OCI-LY7 (cell line): ENCODE measurements at regions of chr19 and their contacts with region 1.

Region 1: DNA sequence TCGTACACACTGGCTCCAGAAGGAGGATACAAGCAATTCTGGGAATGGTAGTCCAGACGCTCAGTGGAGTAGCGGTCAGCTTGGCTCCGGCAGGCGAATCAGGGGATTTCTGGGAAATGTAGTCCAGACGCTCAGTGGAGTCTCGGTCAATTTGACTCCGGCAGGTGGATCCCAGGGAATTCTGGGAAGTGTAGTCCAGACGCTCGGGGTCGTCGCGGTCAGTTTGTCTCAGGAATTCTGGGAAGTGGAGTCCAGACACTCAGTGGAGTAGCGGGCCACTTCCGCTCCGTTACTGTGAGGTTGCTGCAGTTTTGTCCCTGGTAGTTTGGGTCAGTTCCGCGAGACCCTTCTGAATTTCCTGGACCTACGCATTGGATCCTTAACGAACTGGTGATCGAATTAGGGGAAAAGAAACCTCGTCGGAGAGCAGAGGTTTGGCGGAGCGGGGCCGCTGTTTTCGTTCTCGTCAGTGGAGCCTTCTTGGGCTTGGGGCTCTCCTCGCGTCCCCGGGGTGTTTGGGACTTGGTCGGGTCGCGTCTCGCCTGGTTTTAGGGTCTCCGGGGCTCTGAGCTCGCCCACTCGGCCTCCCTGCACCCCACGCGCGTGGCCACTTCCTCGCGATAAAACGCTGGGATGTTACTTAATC is at the start of gene ZNF225:
- DNase-seq: peak; percentile 97
- H3K4me3 ChIP-seq: peak within 1 kb of the TSS; percentile 83
- H3K27ac ChIP-seq: no peak within 1 kb of the TSS
- H3K4me1 ChIP-seq: peaks cover 16% of the 10 kb centered on the region
- CTCF ChIP-seq: no peak
- total RNA-seq, gene ZNF225: 2.4 and 3.5 TPM in 2 replicates

Region 2: DNA sequence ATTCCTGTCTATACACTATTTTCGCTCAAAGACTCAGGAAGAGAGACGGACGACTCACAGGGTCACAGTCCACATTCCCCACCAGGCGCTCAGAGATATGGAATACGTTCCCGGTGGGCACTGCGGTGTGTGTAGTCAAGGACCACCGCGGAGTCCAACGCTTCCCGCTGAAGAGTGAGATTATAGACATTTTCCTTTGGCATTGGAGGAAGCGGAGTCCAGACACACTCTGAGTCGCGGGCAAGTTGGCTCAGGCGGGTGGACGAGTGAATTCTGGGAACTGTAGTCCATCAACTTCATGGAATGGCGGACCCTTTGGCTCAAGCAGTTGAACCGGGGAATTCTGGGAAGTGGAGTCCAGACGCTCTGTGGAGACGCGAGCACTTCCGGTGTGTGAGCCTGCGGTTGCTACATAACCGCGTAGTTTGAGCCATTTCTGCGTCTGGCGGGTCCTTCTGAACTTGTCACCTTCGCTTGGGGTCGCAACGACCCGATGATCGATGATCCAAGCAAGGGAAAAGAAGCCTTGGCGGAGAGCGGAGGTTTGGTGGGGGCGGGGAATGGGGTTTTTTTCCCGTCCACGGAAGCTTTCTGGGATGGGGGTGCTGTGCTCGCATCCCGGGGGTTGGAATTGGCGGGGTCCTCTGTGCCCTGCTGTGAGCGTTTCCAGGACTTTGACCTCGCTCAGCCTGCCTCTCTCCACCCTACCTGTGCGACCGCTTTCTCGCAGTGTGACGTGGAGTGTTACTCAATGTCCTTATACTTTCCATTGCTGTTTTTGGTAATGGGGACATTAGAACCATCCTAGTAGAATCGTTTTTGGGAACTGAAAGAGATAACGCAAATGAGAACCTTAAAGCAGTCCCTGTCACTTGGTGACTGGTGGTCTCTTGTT is 110.4 kb before region 1 on chr19 and contains the start of gene ZNF230:
- CTCF ChIA-PET with region 1: no interaction called
- POLR2A ChIA-PET with region 1: no interaction called
- intact Hi-C with region 1: loop called (anchors 2 kb)
- DNase-seq: peak; percentile 91
- H3K4me3 ChIP-seq: peak within 1 kb of the TSS; percentile 83
- H3K27ac ChIP-seq: no peak within 1 kb of the TSS
- H3K4me1 ChIP-seq: peaks cover 4% of the 10 kb centered on the region
- CTCF ChIP-seq: no peak
- total RNA-seq, gene ZNF230: 1.7 and 1.8 TPM in 2 replicates

Region 3: DNA sequence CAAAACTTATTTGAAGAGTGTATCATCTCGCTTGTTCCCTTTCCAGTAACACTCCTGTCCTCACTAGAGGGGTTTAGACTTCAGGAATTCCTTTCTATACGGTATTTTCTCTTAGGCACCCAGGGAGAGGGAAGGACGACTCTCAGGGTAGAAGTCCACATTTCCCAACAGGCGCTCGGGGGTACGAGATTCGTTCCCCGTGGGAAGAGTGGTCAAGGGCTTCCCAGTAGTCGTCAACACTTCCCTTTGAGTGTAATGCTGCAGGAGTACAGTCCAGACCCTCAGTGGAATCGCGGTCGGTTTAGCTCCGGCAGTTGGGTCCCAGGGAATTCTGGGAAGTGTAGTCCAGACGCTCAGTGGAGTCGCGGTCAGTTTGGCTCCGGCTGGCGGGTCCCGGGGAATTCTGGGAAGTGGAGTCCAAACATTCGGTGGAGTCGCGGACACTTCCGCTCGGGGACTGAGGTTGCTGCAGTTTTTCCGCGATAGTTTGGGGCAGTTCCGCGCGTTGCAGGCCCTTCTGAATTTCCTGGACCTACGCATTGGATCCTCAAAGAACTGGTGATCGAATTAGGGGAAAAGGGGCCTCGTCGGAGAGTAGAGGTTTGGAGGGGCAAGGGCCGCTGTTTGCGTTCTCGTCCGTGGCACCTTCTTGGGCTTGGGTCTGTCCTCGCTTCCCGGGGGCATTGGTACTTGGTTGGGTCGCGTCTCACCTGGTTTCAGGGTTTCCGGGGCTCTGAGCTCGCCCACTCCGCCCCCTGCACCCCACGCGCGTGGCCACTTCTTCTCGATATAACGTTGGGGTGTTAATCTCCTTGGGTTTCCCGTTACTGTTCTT is 19.1 kb before region 1 on chr19 and contains the start of gene ZNF224:
- CTCF ChIA-PET with region 1: no interaction called
- POLR2A ChIA-PET with region 1: no interaction called
- intact Hi-C with region 1: loop called (anchors 1 kb)
- DNase-seq: peak; percentile 92
- H3K4me3 ChIP-seq: peak within 1 kb of the TSS; percentile 92
- H3K27ac ChIP-seq: peak within 1 kb of the TSS; percentile 19
- H3K4me1 ChIP-seq: peaks cover 11% of the 10 kb centered on the region
- CTCF ChIP-seq: no peak
- total RNA-seq, gene ZNF224: 17.5 and 20.4 TPM in 2 replicates

Region 4: GRCh38 chr19:44212250-44212865 is 99.1 kb after region 1 on chr19 and contains the start of gene ZNF227:
- CTCF ChIA-PET with region 1: no interaction called
- POLR2A ChIA-PET with region 1: no interaction called
- intact Hi-C with region 1: loop called (anchors 2 kb)
- DNase-seq: peak; percentile 78
- H3K4me3 ChIP-seq: peak within 1 kb of the TSS; percentile 82
- H3K27ac ChIP-seq: peak within 1 kb of the TSS; percentile 13
- H3K4me1 ChIP-seq: peaks cover 17% of the 10 kb centered on the region
- CTCF ChIP-seq: no peak
- total RNA-seq, gene ZNF227: 16.8 and 20.1 TPM in 2 replicates

Region 5: DNA sequence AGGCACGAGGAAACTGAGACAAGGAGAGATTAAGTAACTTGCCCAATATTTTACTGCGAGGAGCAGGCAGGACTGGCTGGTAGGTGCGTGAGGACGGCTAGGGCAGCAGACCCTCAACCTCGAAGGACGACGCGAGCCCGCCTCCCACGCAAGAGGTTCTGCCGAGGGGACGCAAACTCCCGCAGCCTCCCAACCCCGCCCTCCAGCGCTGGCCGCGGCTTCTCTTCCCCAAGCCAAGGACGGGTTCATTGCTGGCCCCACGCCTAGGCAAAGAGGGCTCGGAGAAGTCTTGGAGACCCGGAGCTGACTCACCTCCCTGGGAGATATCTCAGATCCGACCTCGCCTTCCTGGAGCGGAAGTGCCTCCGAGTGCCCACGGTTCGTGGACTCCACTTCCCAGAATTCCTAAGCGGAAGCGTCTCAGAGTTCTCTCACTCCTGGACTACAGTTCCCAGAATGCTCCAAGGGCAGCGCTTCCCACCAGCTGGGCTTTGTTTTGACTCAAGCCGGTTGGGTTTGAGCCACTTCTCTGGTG is 191.5 kb after region 1 on chr19 and contains the start of gene ZNF235:
- CTCF ChIA-PET with region 1: no interaction called
- POLR2A ChIA-PET with region 1: no interaction called
- intact Hi-C with region 1: loop called (anchors 1 kb)
- DNase-seq: peak; percentile 92
- H3K4me3 ChIP-seq: peak within 1 kb of the TSS; percentile 91
- H3K27ac ChIP-seq: no peak within 1 kb of the TSS
- H3K4me1 ChIP-seq: peaks cover 8% of the 10 kb centered on the region
- CTCF ChIP-seq: no peak
- total RNA-seq, gene ZNF235: 5.1 and 7.7 TPM in 2 replicates

Region 6: DNA sequence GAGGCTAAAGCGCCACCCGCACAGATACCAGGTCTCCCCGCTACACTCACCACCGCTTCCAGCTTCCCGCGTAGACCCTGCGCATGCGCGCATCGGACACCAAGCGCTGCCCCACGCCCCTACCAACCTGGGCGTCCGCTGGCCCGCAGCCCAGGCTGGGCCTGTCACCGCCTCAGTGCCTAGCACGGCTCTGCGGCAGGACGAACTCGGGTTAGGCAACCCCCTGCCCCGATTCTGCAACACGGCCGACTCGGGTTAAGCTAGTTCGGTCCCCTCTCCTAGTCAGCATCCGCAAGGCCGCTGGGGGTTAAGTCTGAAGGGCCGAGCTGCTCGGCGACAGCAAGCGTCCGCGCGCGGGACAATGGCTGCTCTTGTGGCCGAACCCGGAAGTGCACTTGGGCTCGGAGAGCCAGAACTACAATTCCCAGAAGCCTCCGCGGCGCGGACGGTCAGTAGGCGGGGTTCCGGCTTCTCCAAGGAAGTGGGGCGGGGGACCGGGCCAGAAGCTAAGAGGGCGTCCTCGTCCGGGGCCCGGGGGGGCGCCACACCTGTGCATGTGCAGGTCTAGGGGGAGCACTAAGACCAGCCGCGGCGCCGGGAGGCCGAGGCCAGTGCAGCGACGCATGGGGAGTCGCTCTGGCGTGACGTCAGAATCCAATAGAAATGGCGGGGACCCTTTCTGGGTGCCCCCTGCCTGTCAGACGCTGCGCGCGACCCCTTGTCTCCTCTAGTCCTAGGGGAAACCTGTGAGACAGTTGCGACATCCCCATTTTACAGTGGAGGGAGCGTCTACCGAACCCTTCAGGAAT is 387.1 kb after region 1 on chr19 and contains the start of gene ZNF180:
- CTCF ChIA-PET with region 1: no interaction called
- POLR2A ChIA-PET with region 1: no interaction called
- intact Hi-C with region 1: no loop called
- DNase-seq: peak; percentile 98
- H3K4me3 ChIP-seq: peak within 1 kb of the TSS; percentile 86
- H3K27ac ChIP-seq: peak within 1 kb of the TSS; percentile 52
- H3K4me1 ChIP-seq: peaks cover 9% of the 10 kb centered on the region
- CTCF ChIP-seq: peak; percentile 64
- total RNA-seq, gene ZNF180: 11.8 and 14.2 TPM in 2 replicates